ENCODE measurements at regions of chr1 and their contacts with region 1.

Region 1: GRCh38 chr1:54944610-54945544 is 35.6 kb upstream of the TMEM61 start:
- DNase-seq: no peak
- H3K4me3 ChIP-seq: peak overlapping the region in 1 of 4 donors; percentile 32
- H3K27ac ChIP-seq: peak overlapping the region; percentile 56 to 84 (median 74)
- H3K4me1 ChIP-seq: peaks cover 0 to 28% (median 9%) of the 10 kb centered on the region in 3 donors
- H3K27me3 ChIP-seq: no peaks in the 10 kb centered on the region
- CTCF ChIP-seq: peak; percentile 57 to 85 (median 79)
- POLR2A ChIP-seq: no peak

Region 2: DNA sequence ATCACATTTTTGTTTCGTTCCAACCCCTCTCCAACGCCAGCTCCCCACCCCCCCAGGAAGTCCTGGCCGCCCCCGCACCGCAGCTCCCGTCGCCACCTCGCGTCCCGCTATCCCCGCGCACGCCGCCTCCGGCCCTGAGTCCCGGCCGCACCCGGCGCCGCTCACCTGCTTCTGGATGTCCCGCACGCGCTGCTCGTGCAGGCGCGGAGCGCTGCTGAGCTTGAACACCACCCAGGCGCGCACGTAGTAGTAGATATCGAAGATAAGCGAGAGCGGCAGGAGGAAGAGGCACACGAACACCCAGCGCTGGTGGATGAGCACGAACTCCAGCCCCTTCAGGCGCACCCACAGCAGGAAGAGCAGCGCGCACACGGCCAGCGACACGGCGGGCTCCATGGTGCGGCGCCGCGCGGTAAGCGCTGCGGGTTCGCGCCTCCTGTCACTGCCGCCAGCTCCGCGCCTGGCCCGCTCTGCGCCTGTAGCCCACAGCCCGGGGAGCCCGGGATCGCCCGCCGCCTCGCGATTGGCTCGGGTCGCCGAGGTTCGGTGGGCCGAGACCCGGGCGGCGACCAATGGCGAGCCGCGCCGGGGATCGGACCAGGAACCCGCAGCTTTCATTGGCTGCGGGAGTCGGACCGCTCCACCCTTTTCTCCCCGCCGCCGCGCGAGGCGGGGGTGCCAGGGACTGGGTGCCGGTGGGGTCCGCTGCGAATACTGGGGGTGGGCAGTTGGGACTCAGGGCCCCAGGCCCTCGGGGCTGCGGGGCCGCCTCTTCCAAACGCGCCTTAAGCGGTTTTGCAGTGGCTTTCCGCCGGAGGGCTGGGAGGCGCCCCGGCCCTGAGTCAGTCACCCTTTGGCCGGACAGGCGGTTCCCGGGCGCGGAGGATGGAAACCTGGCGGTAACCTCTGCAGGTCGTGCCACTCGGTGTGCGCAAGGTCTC is 57.9 kb before region 1 on chr1 and contains the start of gene DHCR24:
- intact Hi-C with region 1: loop called (anchors 10 kb)
- DNase-seq: no peak
- H3K4me3 ChIP-seq: peak within 1 kb of the TSS; percentile 74 to 92 (median 80)
- H3K27ac ChIP-seq: peak within 1 kb of the TSS; percentile 83 to 93 (median 90)
- H3K4me1 ChIP-seq: peaks cover 18 to 71% (median 26%) of the 10 kb centered on the region in 3 donors
- H3K27me3 ChIP-seq: no peaks in the 10 kb centered on the region
- CTCF ChIP-seq: peak in 1 of 6 experiments; percentile 12
- POLR2A ChIP-seq: peak in 3 of 4 donors; percentile 60 to 91 (median 65)
- total RNA-seq, gene DHCR24: 285 to 499 (median 340) TPM

Measured in esophagus squamous epithelium (tissue), 5 donors.